Prostate gland (tissue), 2 donors: ENCODE measurements at regions of chr16 and their contacts with region 1.

Region 1: GRCh38 chr16:1154291-1154886 is 1.5 kb downstream of the CACNA1H start:
- DNase-seq: no peak
- H3K4me3 ChIP-seq: peak overlapping the region; percentile 35 to 53
- H3K27ac ChIP-seq: peak overlapping the region; percentile 76 to 87
- H3K4me1 ChIP-seq: peaks cover 6% of the 10 kb centered on the region
- H3K27me3 ChIP-seq: no peaks in the 10 kb centered on the region
- CTCF ChIP-seq: no peak
- POLR2A ChIP-seq: no peak

Region 2: DNA sequence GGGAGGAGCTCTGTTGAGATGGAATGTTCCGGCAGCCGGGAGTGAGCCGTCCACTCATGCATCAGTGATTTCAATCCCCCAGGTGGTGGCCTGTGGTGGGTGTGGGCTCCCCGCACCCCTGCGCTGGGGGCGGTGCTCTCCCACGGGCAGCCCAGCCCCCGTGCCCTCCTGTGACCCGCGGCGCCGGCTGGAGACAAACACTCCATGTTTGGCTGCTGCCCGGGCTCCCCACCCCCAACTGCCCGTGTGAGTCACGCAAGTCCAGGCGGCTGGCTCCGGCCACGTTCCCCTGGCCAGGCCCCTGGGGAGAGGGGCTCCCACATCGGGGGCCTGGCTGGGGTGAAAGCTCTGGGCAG is 27.9 kb after region 1 on chr16:
- intact Hi-C with region 1: loop called (anchors 2 kb)
- DNase-seq: no peak
- H3K4me3 ChIP-seq: no peak overlapping the region
- H3K27ac ChIP-seq: peak overlapping the region; percentile 57 to 67
- H3K4me1 ChIP-seq: no peaks in the 10 kb centered on the region
- H3K27me3 ChIP-seq: no peaks in the 10 kb centered on the region
- CTCF ChIP-seq: no peak
- POLR2A ChIP-seq: no peak